Naive thymus-derived CD8-positive, alpha-beta T cell (primary cell): ENCODE measurements at regions of chr7 and their contacts with region 1.

Region 1: DNA sequence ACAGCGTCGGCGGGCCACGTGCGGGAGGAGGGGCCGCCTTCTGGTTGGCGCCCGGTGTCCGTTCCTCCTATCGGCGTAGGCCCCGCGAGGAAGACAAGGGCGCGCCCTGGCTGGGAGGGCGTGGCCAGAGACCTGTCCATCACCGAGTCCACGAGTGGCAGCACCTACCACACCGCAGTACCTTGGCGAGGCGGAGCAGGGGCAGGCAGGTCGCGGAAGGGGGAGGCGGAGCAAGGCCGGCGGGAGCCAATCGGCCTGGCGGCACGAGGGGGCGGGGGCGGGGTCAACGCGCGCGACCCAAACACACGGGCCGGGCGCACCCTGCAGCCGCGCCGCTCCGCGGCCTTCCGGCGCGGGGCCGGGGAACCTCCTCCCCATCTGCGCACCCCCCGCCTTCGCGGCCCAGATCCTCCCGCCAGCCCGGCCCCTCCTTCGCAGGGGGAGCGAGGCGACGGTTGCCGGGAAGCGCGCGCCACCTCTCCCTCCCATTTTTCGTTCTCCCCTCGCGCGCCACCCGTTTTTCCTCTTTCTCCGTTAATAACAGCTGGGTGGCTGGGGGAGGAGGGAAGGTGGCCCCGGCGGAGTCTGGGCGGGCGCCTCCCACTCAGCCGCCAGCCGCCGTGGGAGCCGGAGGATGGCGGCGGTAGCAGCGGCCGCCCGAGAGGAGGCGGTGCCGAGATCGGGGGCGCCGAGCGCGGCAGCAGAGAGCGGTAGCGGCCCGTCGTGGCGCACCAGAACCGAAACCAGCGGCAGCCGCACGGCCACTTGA is at the start of gene ZNRF2:
- DNase-seq: peak; percentile 90 to 100 (median 99)
- ATAC-seq: peak; percentile 82 to 87
- H3K4me3 Mint-ChIP-seq: peak within 1 kb of the TSS; percentile 81 to 97 (median 86)
- H3K27ac Mint-ChIP-seq: peak within 1 kb of the TSS; percentile 61 to 96 (median 95)
- H3K4me1 Mint-ChIP-seq: peaks cover 20 to 48% (median 39%) of the 10 kb centered on the region in 4 donors
- H3K27me3 Mint-ChIP-seq: no peaks in the 10 kb centered on the region
- polyA plus RNA-seq, gene ZNRF2: 1.1 to 2.3 (median 2.2) TPM

Region 2: DNA sequence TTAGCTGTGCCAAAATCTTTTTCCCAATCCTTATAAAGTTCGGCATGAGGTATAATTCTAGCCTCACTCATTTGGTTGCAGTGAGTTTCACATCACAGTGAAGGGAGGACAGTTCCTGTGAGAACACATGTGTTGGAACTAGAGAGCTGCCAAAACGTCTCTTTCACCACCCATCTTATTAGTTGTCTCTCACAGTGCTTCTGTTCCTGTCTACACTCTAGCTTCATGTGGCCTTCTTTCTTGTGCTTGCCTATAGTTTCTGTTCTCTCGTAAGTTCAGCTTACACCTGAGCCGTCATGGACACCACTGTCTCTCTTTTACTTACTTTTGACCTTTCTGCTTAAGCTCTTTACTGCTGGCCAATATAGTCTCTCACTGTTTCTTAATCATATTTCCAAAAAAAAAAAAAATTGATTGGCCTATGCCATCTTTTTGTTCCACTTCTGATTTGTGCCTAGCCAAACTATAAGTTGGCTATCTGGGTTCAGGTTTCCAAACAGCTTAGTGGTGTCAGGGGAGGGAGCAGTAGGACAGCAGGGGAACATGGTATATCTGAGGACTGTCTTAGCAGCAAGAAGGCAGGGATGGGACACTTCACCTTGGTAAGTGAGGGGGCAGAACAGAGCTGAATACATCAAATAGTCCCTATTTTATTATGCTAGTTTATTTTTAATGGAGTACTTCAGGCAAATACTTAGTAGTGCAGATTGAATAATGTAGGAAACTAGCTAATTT is 38.0 kb after region 1 on chr7:
- POLR2A ChIA-PET with region 1: interaction called, 20 read pairs
- DNase-seq: peak in 4 of 10 donors; percentile 17 to 40 (median 34)
- ATAC-seq: peak; percentile 83 to 85
- H3K4me3 Mint-ChIP-seq: peak overlapping the region; percentile 70 to 95 (median 86)
- H3K27ac Mint-ChIP-seq: peak overlapping the region; percentile 89 to 99 (median 94)
- H3K4me1 Mint-ChIP-seq: peaks cover 30 to 85% (median 63%) of the 10 kb centered on the region in 4 donors
- H3K27me3 Mint-ChIP-seq: no peaks in the 10 kb centered on the region

Region 3: DNA sequence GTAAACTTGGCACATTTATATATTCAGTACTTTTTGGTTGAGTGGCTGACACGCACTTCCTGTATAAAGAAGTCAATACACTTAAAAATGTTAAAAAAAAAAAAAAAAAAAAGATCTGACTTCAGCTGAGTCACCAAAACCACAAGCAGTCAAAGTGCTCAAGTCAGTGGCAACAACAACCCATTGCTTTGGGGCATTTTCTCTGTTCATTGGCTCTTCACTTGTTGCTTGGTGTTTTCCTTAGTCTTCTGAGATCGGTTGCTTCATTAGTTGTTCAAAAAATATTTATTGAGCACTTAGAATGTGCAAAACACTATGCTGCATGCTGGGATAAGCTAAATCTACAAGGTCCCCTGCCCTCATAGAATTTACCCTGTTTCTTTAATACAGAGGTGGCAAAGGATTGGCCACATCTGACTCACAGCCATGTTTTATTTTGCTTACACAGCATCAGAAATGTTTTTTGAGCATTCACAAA is 63.6 kb after region 1 on chr7:
- POLR2A ChIA-PET with region 1: interaction called, 18 read pairs
- DNase-seq: peak in 9 of 10 donors; percentile 37 to 79 (median 56)
- ATAC-seq: peak; percentile 92 to 93
- H3K4me3 Mint-ChIP-seq: peak overlapping the region; percentile 1 to 75 (median 57)
- H3K27ac Mint-ChIP-seq: peak overlapping the region; percentile 34 to 98 (median 73)
- H3K4me1 Mint-ChIP-seq: peaks cover 15 to 84% (median 43%) of the 10 kb centered on the region in 4 donors
- H3K27me3 Mint-ChIP-seq: no peaks in the 10 kb centered on the region

Region 4: DNA sequence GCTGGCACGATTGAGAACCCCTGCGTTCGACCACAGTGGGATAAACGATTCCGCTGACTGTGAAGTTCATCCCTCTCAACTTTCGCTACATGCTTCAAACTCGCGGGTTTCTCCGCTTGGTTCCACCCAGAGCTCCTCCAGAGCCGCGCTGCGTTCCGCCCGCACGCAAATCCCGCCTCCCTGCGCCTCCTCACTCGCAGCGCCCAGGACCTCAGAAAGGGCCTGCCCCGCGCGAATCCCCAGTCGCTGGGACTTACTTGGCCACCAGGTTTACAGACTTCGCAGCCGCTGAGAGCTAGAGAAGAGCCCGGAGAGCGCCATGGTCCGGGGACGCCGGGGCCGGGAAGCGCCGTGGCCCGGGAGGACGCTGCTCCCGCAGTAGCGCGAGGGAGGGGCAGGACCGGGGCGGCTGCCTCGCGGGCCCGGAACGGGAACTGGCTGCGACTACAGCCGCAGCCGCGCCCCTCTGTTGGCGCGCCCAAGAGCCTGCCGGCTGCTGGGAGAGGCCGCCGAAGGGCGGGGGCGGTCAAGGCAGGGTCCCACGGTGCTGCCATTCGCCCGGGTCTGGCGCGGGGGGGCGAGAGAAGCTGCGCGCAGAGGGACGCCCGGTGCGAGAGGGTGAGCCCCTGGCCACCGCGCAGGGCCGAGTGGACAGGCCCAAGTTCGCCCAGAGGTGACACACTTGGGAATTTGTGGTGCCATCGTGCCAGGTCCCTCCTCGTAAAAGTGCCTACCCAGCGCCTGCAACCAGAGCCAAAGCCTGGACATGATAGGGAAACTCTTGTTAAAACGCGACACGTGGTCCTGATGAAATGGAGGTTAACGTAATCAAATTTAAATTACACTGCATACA is 194.1 kb after region 1 on chr7 and contains the start of gene NOD1:
- POLR2A ChIA-PET with region 1: interaction called, 15 read pairs
- DNase-seq: peak; percentile 33 to 72 (median 60)
- ATAC-seq: peak; percentile 87 to 91
- H3K4me3 Mint-ChIP-seq: peak within 1 kb of the TSS in 9 of 10 donors; percentile 92 to 98 (median 95)
- H3K27ac Mint-ChIP-seq: peak within 1 kb of the TSS in 8 of 10 donors; percentile 45 to 94 (median 93)
- H3K4me1 Mint-ChIP-seq: peaks cover 19 to 59% (median 56%) of the 10 kb centered on the region in 4 donors
- H3K27me3 Mint-ChIP-seq: no peaks in the 10 kb centered on the region
- polyA plus RNA-seq, gene NOD1: 5.7 to 9.3 (median 6.4) TPM

Region 5: GRCh38 chr7:30493228-30493627 is 208.7 kb after region 1 on chr7:
- POLR2A ChIA-PET with region 1: no interaction called
- DNase-seq: no peak
- ATAC-seq: no peak
- H3K4me3 Mint-ChIP-seq: no peak overlapping the region
- H3K27ac Mint-ChIP-seq: no peak overlapping the region
- H3K4me1 Mint-ChIP-seq: peaks cover 0 to 1% (median 0%) of the 10 kb centered on the region in 4 donors
- H3K27me3 Mint-ChIP-seq: peaks cover 0 to 4% (median 1%) of the 10 kb centered on the region in 5 donors